ENCODE measurements at regions of chr4 and their contacts with region 1.

Region 1: DNA sequence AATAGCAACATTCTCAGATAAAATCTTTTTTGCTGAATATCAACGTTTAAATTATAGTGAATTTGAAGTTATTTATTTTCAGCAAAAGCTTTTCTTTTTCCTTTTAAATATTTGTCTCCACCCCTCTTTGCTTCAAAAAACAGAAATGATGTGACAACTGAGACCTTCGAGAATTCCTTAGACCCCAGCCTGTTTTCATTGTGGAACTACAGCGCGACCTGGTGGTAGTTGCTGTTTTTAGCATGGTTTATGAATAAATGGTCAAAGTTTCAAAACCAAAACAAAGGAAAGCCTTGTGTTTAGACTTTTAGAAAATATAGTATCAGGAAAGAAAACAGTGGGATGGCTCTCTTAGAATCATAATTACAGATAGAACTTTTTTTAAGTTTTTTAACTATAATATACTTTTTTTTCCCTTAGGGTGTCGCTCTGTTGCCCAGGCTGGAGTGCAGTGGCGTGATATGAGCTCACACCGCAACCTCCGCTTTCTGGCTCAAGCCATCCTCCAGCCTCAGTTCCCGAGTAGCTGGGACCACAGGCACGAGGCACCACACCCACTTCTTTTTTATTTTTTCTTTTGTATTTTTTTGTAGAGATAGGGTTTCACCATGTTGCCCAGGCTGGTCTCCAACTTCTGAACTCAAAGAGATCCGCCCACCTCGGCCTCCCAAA is 26.8 kb upstream of the TMEM184C start:
- DNase-seq: peak; percentile 61
- H3K4me3 Mint-ChIP-seq: no peak overlapping the region
- H3K27ac Mint-ChIP-seq: no peak overlapping the region
- H3K4me1 Mint-ChIP-seq: no peaks in the 10 kb centered on the region
- H3K27me3 Mint-ChIP-seq: no peaks in the 10 kb centered on the region

Region 2: GRCh38 chr4:147518846-147519767 is 71.3 kb before region 1 on chr4:
- CTCF ChIA-PET with region 1: interaction called, 17 read pairs
- DNase-seq: peak; percentile 68
- H3K4me3 Mint-ChIP-seq: no peak overlapping the region
- H3K27ac Mint-ChIP-seq: no peak overlapping the region
- H3K4me1 Mint-ChIP-seq: no peaks in the 10 kb centered on the region
- H3K27me3 Mint-ChIP-seq: peaks cover 3% of the 10 kb centered on the region

Region 3: DNA sequence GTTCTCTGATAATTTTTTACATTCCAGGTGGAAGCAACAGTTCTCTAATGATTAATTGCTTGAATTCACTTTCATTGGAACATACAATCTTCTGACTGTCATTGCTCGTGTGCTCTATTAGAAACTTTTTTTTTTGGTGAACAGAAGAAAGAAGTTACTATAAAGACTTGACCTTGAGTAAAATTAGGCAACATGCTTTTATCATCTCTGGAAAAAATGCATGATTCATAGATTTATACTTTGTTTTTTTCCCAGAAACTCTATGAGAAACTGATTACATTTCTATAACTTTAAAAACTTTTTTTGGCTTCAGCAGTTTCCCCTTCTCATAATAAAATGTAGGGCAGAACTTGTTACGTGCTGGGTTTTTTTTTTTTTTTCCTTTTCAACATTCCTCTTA is 309.1 kb after region 1 on chr4:
- CTCF ChIA-PET with region 1: no interaction called
- DNase-seq: no peak
- H3K4me3 Mint-ChIP-seq: no peak overlapping the region
- H3K27ac Mint-ChIP-seq: no peak overlapping the region
- H3K4me1 Mint-ChIP-seq: no peaks in the 10 kb centered on the region
- H3K27me3 Mint-ChIP-seq: no peaks in the 10 kb centered on the region